Activated B cell treated with CpG ODN at 0.5 μM for 24 hours (primary cell): ENCODE measurements at regions of chr5 and their contacts with region 1.

Region 1: DNA sequence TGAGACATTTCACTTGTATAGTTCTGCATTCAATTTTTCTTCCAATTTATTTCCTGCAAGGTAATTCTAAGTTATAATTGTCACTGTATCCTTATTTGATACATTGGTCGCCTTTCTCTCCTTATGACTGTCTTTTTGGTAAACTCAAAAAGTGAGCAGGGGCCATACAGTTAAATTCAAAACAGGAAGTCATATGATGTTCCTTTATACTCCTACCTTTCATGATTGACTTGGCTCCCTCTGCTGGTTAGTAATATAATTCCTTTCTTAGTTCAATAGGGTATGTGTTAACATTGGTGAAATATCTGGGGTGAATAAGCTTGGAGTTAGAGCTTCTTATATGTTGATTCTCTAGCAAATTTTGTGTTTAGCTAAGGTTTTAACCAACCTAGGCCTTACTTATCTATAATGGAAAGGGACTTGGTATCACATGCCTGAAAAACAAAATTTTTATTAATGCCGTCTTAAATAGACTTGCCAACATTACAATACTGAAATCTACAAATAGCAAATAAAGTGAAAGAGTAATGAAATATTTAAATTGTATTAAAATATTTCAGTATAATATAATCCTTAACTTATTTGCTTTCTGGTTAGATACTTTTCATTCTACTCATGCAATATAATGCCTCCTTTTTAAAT is 6.0 kb upstream of the NIPBL start:
- DNase-seq: no peak
- ATAC-seq: peak; percentile 85
- H3K4me3 Mint-ChIP-seq: no peak overlapping the region
- H3K27ac Mint-ChIP-seq: peak overlapping the region; percentile 62
- H3K4me1 Mint-ChIP-seq: peaks cover 29% of the 10 kb centered on the region
- H3K27me3 Mint-ChIP-seq: no peaks in the 10 kb centered on the region
- CTCF ChIP-seq: peak; percentile 56

Region 2: DNA sequence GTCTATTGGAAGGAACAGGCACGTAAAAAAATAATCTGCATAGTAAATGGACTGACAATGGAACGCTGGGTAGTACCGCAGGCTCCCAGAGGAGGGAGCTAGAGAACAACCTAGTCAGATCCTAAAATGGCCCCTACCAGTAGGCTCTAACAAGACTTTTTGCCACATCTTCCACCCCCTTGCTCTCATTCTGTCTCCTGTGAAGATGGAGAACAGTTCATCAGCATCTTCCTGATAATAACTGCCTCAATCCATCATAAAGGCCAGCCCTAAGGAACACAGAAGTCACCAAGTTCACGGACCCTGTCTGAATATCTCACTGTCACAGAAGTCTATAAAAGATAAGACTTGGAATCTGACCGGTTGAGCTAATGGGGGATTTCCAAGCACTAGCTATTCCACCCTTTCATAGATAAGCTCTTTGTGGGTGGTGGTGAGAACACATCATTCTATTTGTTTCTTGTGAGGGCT is 130.7 kb before region 1 on chr5:
- CTCF ChIA-PET with region 1: interaction called, 7 read pairs
- POLR2A ChIA-PET with region 1: no interaction called
- intact Hi-C with region 1: loop called (anchors 1 kb)
- DNase-seq: peak; percentile 47
- ATAC-seq: peak; percentile 75
- H3K4me3 Mint-ChIP-seq: no peak overlapping the region
- H3K27ac Mint-ChIP-seq: no peak overlapping the region
- H3K4me1 Mint-ChIP-seq: peaks cover 11% of the 10 kb centered on the region
- H3K27me3 Mint-ChIP-seq: peaks cover 25% of the 10 kb centered on the region
- CTCF ChIP-seq: no peak

Region 3: DNA sequence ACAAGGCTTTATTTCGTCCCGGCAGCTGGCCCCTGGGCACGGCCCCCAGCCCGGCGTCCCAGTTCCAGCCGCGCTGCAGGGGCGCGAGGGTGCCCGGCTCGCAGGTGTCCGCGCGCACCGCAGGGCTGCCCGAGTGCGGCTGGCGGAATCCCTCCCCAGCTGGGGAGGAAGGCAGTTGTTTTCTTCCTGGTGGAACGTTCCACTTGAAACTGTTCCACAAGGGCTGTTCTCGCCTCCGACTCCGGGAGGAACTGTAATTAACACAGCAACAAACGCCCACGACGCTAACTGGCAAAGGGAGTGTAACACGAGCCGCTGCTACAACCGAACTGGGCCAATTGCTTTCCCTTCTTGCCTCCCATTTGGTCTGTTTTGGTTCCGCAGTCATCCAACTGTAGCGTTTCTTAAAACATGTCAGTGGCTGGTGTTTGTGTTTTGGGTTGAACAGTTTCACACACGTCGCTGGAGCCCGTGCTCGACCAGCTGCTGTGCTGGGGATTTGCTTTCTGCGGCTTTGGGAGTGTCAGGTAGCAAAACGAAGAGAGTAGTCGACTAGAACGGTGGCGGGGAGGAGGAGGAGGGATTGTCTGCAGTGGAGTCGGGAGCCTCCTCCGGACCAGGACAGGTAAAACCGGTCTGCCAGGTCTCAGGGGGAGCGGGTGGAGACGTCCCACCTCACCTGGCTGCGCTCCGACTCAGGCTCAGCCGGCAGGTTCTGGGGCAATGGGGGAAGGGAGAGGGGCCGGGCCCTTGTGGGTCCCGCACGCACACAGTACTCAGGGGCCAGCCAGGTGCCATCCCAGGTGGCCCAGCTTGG is 125.5 kb before region 1 on chr5:
- CTCF ChIA-PET with region 1: interaction called, 7 read pairs
- POLR2A ChIA-PET with region 1: no interaction called
- intact Hi-C with region 1: loop called (anchors 1 kb)
- DNase-seq: peak; percentile 48
- ATAC-seq: peak; percentile 74
- H3K4me3 Mint-ChIP-seq: peak overlapping the region; percentile 89
- H3K27ac Mint-ChIP-seq: peak overlapping the region; percentile 22
- H3K4me1 Mint-ChIP-seq: peaks cover 21% of the 10 kb centered on the region
- H3K27me3 Mint-ChIP-seq: peaks cover 10% of the 10 kb centered on the region
- CTCF ChIP-seq: no peak

Region 4: GRCh38 chr5:37086466-37087173 is 216.1 kb after region 1 on chr5:
- CTCF ChIA-PET with region 1: no interaction called
- POLR2A ChIA-PET with region 1: no interaction called
- intact Hi-C with region 1: no loop called
- DNase-seq: no peak
- ATAC-seq: no peak
- H3K4me3 Mint-ChIP-seq: no peak overlapping the region
- H3K27ac Mint-ChIP-seq: no peak overlapping the region
- H3K4me1 Mint-ChIP-seq: no peaks in the 10 kb centered on the region
- H3K27me3 Mint-ChIP-seq: no peaks in the 10 kb centered on the region
- CTCF ChIP-seq: no peak